ENCODE measurements at regions of chr17 and their contacts with region 1.

Region 1: DNA sequence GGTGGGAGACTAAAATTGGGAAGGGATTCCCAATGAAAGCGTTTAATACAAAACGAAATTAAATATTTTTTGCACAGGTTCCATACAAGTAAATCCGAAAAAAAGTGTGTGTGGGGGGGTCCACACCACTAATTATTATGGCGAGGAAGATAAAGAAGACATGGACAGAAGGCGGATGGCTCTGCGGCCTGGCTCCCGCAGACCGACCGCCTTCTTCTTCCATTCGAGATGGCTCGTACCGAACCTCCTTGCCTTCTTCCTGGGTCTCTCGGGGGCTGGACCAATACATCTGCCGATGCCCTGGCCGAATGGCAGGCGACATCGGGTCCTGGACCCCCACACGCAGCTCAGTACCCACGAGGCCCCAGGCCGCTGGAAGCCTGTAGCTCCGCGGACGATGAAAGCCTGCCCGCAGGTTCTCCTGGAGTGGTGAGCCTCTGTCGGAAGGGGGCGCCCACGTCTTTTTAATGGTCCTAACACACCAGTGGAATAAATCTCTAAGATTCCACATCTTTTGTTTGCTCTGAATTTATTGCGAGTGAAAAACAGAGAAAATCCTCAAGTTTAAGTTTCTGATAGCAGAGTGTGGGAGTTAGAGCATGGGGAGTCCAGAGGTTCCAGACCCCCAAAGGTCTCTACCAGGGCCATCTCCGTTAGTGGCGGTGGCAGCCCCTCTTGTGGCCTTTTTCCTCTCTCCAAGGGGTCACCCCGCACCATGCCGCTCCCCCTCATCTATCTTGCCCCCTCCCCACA is 1.4 kb downstream of the PRAC2 start:
- DNase-seq: no peak
- H3K4me3 ChIP-seq: no peak overlapping the region
- H3K27me3 ChIP-seq: peaks cover 69% of the 10 kb centered on the region
- CTCF ChIP-seq: peak; percentile 79

Region 2: DNA sequence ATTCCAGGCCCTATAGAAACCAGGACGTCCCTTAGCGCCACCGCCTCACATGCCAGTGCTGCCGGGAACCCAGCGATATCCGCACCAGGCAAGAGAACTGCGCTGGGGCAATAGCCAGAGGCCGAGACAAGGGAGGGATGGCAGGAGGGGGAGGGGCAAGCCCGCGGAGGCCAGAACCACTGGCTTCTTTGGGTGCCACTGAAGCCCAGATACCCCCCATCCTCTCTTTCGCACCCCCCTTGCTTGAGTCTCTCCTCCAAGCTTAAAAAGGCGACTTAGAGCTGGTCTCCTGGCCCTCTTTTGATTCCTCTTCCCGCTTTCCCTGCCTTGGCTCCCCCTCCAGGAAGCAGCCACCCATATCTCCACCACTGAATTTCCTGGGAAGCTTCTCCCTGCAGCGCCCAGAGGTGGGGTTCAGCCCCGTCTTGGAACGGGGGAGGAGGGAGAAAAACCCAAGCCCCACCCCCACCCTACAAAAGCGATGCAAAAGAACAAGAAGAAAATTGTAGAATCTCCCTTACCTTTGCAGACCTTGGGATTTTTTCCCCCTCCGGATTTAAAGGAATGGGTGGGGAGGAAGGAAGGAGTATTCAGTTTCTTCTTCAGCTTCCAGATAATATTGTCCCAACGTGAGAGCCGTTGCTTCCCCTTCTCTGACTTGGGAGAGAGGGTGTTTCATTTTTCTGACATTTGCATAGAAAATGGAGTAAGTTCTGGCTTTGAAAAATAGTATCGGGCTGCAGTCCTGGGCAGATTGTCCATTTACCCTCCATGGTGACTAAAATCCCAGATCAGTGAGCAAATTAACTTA is 120.3 kb before region 1 on chr17:
- CTCF ChIA-PET with region 1: no interaction called
- POLR2A ChIA-PET with region 1: no interaction called
- DNase-seq: no peak
- H3K4me3 ChIP-seq: no peak overlapping the region
- H3K27me3 ChIP-seq: peaks cover 92% of the 10 kb centered on the region
- CTCF ChIP-seq: no peak

Region 3: DNA sequence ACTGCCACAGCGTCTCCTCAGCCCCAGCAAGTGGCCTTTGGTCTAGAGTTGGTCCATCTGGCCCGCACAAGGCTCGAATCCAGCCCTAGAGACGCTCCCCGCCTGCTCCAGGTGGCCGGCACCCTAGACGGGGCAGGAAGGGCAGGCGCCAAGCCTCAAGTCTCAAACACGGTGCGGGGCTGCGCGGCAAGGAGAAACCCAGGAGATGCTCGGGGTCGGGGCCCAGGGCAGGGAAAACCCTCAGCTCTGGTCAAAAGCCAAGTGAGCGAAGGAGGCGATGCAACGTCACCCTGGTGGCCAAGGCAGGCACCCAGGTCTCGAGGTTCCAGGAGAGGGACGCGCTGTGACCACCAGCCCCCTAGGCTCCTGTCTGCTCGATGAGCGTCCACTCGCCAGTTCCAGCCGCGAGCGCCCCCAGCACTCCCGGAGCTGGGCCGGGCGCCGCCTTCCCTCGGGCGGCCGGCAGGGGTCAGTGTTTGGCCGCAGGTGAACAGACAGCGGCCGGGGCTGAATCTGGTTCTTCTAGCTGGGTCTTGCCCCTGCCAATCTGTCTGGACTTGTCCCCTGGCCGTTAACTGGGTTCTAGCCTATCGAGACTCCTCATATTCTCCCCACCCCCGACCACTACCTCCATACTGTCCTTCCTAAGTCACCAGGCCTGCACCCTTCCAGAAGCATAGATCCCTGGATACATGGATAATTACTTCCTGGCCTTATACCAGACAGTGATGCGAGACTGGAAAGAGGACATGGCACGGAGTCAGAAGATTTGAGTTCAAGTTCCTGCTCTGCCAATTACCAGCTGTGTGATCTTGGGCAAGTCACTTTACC is 46.1 kb before region 1 on chr17:
- CTCF ChIA-PET with region 1: interaction called, 35 read pairs
- POLR2A ChIA-PET with region 1: no interaction called
- DNase-seq: no peak
- H3K4me3 ChIP-seq: peak overlapping the region; percentile 16; the same call in 1 of the 2 replicates
- H3K27me3 ChIP-seq: peaks cover 9% of the 10 kb centered on the region
- CTCF ChIP-seq: peak; percentile 96

Region 4: GRCh38 chr17:48711102-48711501 is 13.3 kb before region 1 on chr17:
- CTCF ChIA-PET with region 1: interaction called, 15 read pairs
- POLR2A ChIA-PET with region 1: no interaction called
- DNase-seq: no peak
- H3K4me3 ChIP-seq: no peak overlapping the region
- H3K27me3 ChIP-seq: peaks cover 10% of the 10 kb centered on the region
- CTCF ChIP-seq: no peak

Region 5: GRCh38 chr17:48767263-48767774 is 42.9 kb after region 1 on chr17:
- CTCF ChIA-PET with region 1: interaction called, 19 read pairs
- POLR2A ChIA-PET with region 1: no interaction called
- DNase-seq: no peak
- H3K4me3 ChIP-seq: no peak overlapping the region
- H3K27me3 ChIP-seq: peaks cover 10% of the 10 kb centered on the region
- CTCF ChIP-seq: no peak

Region 6: GRCh38 chr17:48799069-48799723 is 74.8 kb after region 1 on chr17:
- CTCF ChIA-PET with region 1: interaction called, 20 read pairs
- POLR2A ChIA-PET with region 1: no interaction called
- DNase-seq: no peak
- H3K4me3 ChIP-seq: no peak overlapping the region
- H3K27me3 ChIP-seq: peaks cover 4% of the 10 kb centered on the region
- CTCF ChIP-seq: no peak

Region 7: GRCh38 chr17:48816774-48817590 is 92.6 kb after region 1 on chr17 and contains the start of gene TTLL6:
- CTCF ChIA-PET with region 1: interaction called, 11 read pairs
- POLR2A ChIA-PET with region 1: no interaction called
- DNase-seq: no peak
- H3K4me3 ChIP-seq: peak within 1 kb of the TSS; percentile 37
- H3K27me3 ChIP-seq: peaks cover 12% of the 10 kb centered on the region
- CTCF ChIP-seq: no peak
- polyA plus RNA-seq, gene TTLL6: 0.02 TPM in 1 of 2 replicates, not detected in the other

Region 8: DNA sequence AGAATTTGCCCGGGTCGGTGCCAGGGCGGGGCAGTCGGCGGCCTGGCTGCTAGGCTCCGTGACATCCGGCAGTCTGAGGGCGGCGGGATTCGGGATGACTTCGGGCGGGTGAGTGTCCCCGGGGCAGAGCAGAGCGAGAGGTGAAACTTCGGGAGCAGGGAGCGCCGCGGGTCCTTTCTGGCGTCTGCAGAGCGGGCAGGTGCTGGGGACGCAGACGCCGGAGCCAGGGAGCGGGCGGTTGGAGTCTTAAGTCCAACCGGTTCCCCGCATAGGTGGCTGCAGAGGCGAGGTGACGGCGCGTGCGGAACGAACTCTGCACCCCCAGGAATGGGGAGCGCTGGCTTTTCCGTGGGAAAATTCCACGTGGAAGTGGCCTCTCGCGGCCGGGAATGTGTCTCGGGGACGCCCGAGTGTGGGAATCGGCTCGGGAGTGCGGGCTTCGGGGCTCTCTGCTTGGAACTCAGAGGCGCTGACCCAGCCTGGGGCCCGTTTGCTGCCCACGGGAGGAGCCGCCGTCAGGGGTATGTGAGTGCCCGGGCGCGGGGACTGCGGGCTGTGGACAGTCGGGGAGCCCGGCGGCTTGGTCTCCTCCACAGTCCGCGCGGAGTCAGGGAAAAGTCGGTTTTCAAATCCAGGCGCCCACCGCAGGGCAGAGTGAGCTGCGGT is 408.4 kb after region 1 on chr17 and contains the start of gene B4GALNT2:
- CTCF ChIA-PET with region 1: no interaction called
- POLR2A ChIA-PET with region 1: interaction called, 14 read pairs
- DNase-seq: no peak
- H3K4me3 ChIP-seq: peak within 1 kb of the TSS; percentile 40
- H3K27me3 ChIP-seq: peaks cover 4% of the 10 kb centered on the region; the same call in 1 of the 2 replicates
- CTCF ChIP-seq: no peak
- polyA plus RNA-seq, gene B4GALNT2: 0.05 and 0.12 TPM in 2 replicates

Measured in BJ (cell line).